ENCODE measurements at regions of chr22 and their contacts with region 1.

Region 1: GRCh38 chr22:31080848-31081649 is at the start of gene SMTN:
- DNase-seq: peak; percentile 90
- H3K4me3 Mint-ChIP-seq: peak within 1 kb of the TSS; percentile 85
- H3K27ac Mint-ChIP-seq: peak within 1 kb of the TSS; percentile 14
- H3K4me1 Mint-ChIP-seq: peaks cover 38% of the 10 kb centered on the region
- H3K27me3 Mint-ChIP-seq: no peaks in the 10 kb centered on the region
- total RNA-seq, gene SMTN: 36.4 to 41.4 TPM

Region 2: GRCh38 chr22:30763815-30764686 is 317.0 kb before region 1 on chr22:
- CTCF ChIA-PET with region 1: interaction called, 19 read pairs
- POLR2A ChIA-PET with region 1: no interaction called
- DNase-seq: peak; percentile 67
- H3K4me3 Mint-ChIP-seq: no peak overlapping the region
- H3K27ac Mint-ChIP-seq: no peak overlapping the region
- H3K4me1 Mint-ChIP-seq: no peaks in the 10 kb centered on the region
- H3K27me3 Mint-ChIP-seq: no peaks in the 10 kb centered on the region

Region 3: GRCh38 chr22:30920407-30920806 is 160.6 kb before region 1 on chr22:
- CTCF ChIA-PET with region 1: interaction called, 42 read pairs
- POLR2A ChIA-PET with region 1: interaction called, 7 read pairs
- DNase-seq: peak; percentile 82
- H3K4me3 Mint-ChIP-seq: peak overlapping the region; percentile 40
- H3K27ac Mint-ChIP-seq: no peak overlapping the region
- H3K4me1 Mint-ChIP-seq: peaks cover 15% of the 10 kb centered on the region
- H3K27me3 Mint-ChIP-seq: no peaks in the 10 kb centered on the region

Region 4: DNA sequence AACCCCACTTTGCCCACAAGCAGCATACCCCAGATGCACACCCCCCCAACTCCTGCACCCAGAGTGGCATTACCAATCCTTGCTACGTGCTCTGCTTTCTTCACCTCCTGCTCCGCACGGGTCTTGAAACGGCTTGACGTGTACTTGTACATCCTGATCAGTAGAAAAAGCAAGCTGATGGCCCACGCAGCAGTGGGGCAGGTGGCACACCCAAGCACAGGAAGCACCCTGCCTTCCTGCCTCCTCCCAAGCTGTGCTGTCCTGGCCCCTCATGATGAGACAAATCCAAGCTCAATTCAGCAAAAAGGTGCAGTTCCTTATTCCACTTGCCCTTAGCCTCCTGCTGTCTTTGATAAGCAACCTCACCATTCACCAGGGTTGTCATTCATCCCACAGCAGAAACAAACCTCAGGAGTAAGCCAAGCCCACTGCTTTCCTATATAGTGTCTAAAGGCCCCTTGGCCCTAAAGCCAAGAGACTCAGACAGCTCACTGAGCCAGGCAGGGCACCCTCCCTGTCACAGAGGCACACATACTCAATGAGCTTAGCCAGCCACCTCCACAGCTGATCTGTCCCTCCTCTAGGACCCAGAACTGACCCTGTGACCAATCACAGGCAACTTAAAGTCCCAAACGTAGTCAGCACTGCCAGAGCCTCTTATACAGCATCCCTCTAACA is 140.2 kb before region 1 on chr22:
- CTCF ChIA-PET with region 1: interaction called, 27 read pairs
- POLR2A ChIA-PET with region 1: interaction called, 4 read pairs
- DNase-seq: peak; percentile 62
- H3K4me3 Mint-ChIP-seq: peak overlapping the region; percentile 77
- H3K27ac Mint-ChIP-seq: peak overlapping the region; percentile 91
- H3K4me1 Mint-ChIP-seq: peaks cover 78% of the 10 kb centered on the region
- H3K27me3 Mint-ChIP-seq: no peaks in the 10 kb centered on the region

Region 5: GRCh38 chr22:30947816-30948454 is 133.1 kb before region 1 on chr22:
- CTCF ChIA-PET with region 1: interaction called, 27 read pairs
- POLR2A ChIA-PET with region 1: interaction called, 4 read pairs
- DNase-seq: no peak
- H3K4me3 Mint-ChIP-seq: no peak overlapping the region
- H3K27ac Mint-ChIP-seq: no peak overlapping the region
- H3K4me1 Mint-ChIP-seq: peaks cover 59% of the 10 kb centered on the region
- H3K27me3 Mint-ChIP-seq: no peaks in the 10 kb centered on the region

Region 6: GRCh38 chr22:31093086-31093850 is 12.2 kb after region 1 on chr22:
- CTCF ChIA-PET with region 1: interaction called, 17 read pairs
- POLR2A ChIA-PET with region 1: interaction called, 5 read pairs
- DNase-seq: no peak
- H3K4me3 Mint-ChIP-seq: no peak overlapping the region
- H3K27ac Mint-ChIP-seq: no peak overlapping the region
- H3K4me1 Mint-ChIP-seq: no peaks in the 10 kb centered on the region
- H3K27me3 Mint-ChIP-seq: no peaks in the 10 kb centered on the region

Measured in activated CD4-positive, alpha-beta memory T cell treated with anti-CD3 and anti-CD28 coated beads, Interleukin-2, amount 10 ng/mL, durations not matched to agents 7 days and 5 days (primary cell).